ENCODE measurements at regions of chr5 and their contacts with region 1.

Region 1: GRCh38 chr5:42889311-42889933 is 77.7 kb upstream of the SELENOP start:
- DNase-seq: peak; percentile 36 to 80
- ATAC-seq: peak; percentile 71 to 94 (median 91)
- H3K4me3 ChIP-seq: no peak overlapping the region
- H3K27ac ChIP-seq: no peak overlapping the region
- H3K4me1 ChIP-seq: no peaks in the 10 kb centered on the region
- H3K27me3 ChIP-seq: no peaks in the 10 kb centered on the region
- CTCF ChIP-seq: peak; percentile 83 to 96 (median 90)

Region 2: DNA sequence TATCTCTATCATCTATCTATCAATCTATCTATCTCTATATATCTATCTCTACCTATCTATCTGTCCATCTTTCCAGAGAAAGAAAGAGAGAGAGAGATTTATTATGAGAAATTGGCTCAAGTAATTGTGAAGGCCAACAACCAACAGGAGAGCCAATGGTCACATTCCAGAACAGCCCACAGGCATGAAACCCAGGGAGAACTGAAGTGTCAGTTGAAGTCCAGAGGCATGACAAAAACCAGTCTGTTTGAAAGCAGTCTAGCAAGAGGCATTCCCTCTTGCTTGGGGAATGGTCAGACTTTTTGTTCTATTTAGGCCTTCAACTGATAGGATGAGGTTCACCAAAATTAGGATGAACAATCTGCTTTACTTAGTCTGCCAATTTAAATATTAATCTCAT is 1291.4 kb before region 1 on chr5:
- intact Hi-C with region 1: no loop called
- DNase-seq: no peak
- ATAC-seq: no peak
- H3K4me3 ChIP-seq: no peak overlapping the region
- H3K27ac ChIP-seq: no peak overlapping the region
- H3K4me1 ChIP-seq: no peaks in the 10 kb centered on the region
- H3K27me3 ChIP-seq: no peaks in the 10 kb centered on the region
- CTCF ChIP-seq: no peak

Region 3: GRCh38 chr5:41856644-41857491 is 1032.6 kb before region 1 on chr5:
- intact Hi-C with region 1: loop called in 5 of 10 experiments (anchors 2 to 10 kb)
- DNase-seq: peak in 1 of 2 donors; percentile 71
- ATAC-seq: peak; percentile 75 to 91 (median 84)
- H3K4me3 ChIP-seq: no peak overlapping the region
- H3K27ac ChIP-seq: no peak overlapping the region
- H3K4me1 ChIP-seq: peaks cover 0 to 4% (median 0%) of the 10 kb centered on the region in 9 donors
- H3K27me3 ChIP-seq: no peaks in the 10 kb centered on the region
- CTCF ChIP-seq: peak; percentile 72 to 87 (median 82)

Region 4: DNA sequence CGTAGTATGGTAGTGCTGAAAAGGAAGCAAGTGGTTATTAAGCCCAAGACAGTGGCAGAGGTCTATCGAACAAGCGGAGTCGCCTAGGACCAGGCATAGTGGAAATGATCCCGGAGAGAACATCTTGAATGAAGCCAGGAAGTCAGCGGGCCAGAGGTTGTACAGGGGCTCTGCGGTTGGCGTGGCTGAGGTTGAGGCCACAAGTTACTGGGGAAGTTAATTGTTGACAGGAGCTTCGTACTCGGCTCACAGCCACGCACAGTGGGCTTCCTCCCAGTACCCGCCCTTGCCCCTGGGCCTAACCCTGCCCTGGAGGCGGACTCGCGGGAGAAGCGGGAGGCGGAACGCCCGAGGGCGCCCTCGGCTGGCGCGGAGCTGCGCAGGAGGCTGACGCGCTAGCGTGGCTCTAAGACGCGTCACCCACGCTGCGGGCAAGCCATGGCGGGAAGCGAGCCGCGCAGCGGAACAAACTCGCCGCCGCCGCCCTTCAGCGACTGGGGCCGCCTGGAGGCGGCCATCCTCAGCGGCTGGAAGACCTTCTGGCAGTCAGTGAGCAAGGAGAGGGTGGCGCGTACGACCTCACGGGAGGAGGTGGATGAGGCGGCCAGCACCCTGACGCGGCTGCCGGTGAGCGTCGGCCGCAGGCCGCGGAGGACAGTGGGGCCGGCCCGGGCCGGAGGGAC is 964.4 kb before region 1 on chr5 and contains the start of gene FBXO4:
- intact Hi-C with region 1: loop called in 1 of 10 experiments (anchors 5 kb)
- DNase-seq: peak; percentile 85 to 91
- ATAC-seq: peak; percentile 98 to 100 (median 99)
- H3K4me3 ChIP-seq: peak within 1 kb of the TSS; percentile 45 to 90 (median 82)
- H3K27ac ChIP-seq: peak within 1 kb of the TSS; percentile 76 to 99 (median 95)
- H3K4me1 ChIP-seq: peaks cover 0 to 35% (median 14%) of the 10 kb centered on the region in 9 donors
- H3K27me3 ChIP-seq: no peaks in the 10 kb centered on the region
- CTCF ChIP-seq: peak; percentile 19 to 85 (median 58)
- total RNA-seq, gene FBXO4: 3.6 to 7.2 (median 5.3) TPM

Region 5: DNA sequence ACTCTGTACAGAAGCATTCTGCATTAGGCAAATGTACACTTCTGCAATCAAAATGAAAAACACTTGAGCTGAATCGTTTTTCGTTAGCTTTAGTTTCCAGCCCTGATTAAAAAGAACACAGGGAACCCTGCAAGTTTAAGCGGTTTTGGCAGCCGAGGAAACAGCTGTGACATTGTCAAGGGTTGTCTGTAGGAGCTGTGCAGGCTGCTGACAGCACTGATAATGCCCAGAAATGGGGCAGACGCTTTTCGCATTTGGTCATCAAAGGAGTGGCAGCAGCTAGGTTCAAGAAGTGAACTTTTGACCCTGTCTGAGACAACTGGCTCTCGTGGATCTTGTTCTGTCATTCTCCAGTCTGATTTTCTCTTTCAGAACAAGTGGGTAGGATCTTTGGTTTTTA is 298.4 kb before region 1 on chr5:
- intact Hi-C with region 1: loop called in 3 of 10 experiments (anchors 10 kb)
- DNase-seq: peak; percentile 55 to 70
- ATAC-seq: peak; percentile 74 to 93 (median 84)
- H3K4me3 ChIP-seq: peak overlapping the region in 3 of 10 donors; percentile 6 to 10 (median 7)
- H3K27ac ChIP-seq: peak overlapping the region; percentile 10 to 76 (median 40)
- H3K4me1 ChIP-seq: peaks cover 0 to 68% (median 45%) of the 10 kb centered on the region in 9 donors
- H3K27me3 ChIP-seq: no peaks in the 10 kb centered on the region
- CTCF ChIP-seq: no peak

Region 6: GRCh38 chr5:42811591-42812446 is 77.6 kb before region 1 on chr5 and contains the start of gene SELENOP:
- intact Hi-C with region 1: loop called in 9 of 10 experiments (anchors 2 to 10 kb)
- DNase-seq: peak in 1 of 2 donors; percentile 84
- ATAC-seq: peak; percentile 92 to 97 (median 96)
- H3K4me3 ChIP-seq: peak within 1 kb of the TSS; percentile 38 to 67 (median 60)
- H3K27ac ChIP-seq: peak within 1 kb of the TSS; percentile 62 to 93 (median 84)
- H3K4me1 ChIP-seq: peaks cover 0 to 52% (median 35%) of the 10 kb centered on the region in 9 donors
- H3K27me3 ChIP-seq: no peaks in the 10 kb centered on the region
- CTCF ChIP-seq: no peak
- total RNA-seq, gene SELENOP: 149 to 373 (median 181) TPM

Region 7: DNA sequence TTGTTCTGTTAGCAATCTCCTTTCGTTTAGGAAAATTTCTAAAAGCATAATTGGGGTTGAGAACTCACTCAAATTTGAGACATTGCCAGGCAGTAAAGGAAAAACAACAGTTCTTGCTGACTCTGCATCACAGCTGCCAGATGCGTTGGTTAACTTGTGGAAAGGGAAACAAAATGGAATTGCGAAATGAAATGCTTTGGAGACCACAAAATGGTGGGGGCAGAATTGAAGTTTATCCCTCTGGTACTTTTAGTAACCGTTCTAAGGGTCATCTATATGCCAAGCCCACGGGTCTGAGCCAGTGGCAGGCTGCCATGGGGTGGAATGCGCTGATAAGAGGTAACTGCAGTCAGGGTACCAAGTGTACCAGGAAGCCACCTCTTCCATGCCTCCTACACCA is 49.2 kb before region 1 on chr5:
- intact Hi-C with region 1: no loop called
- DNase-seq: peak; percentile 37 to 57
- ATAC-seq: peak; percentile 57 to 94 (median 77)
- H3K4me3 ChIP-seq: peak overlapping the region in 1 of 10 donors; percentile 4
- H3K27ac ChIP-seq: peak overlapping the region in 8 of 10 donors; percentile 20 to 72 (median 42)
- H3K4me1 ChIP-seq: peaks cover 2 to 46% (median 29%) of the 10 kb centered on the region in 9 donors
- H3K27me3 ChIP-seq: no peaks in the 10 kb centered on the region
- CTCF ChIP-seq: no peak

Measured in heart right ventricle (tissue), 16 donors.